IMR-90 (cell line): ENCODE measurements at regions of chr3 and their contacts with region 1.

Region 1: DNA sequence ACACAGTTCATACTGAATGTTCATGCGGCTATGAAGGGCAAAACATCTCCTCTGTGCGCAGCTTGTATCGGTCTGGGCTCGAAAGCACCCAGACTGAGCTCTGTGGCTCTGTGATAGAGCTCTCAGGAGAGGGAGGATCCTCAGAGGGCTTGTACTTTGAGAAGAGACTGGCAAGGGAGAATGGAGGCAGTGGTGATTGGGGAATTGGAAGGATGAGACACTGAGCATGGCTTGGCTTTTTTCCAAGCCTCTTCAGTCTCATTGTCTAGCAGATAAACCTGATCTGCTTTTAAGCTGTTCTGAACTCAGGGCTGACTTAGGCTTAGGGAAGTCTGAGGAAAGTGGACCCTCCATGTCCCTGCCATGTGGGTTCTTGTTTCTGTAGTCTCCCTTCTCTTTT is 43.0 kb downstream of the RAD54L2 start:
- DNase-seq: peak; percentile 48
- ATAC-seq: peak; percentile 18; the same call in 1 of the 2 replicates
- H3K4me3 ChIP-seq: no peak overlapping the region
- H3K27ac ChIP-seq: no peak overlapping the region
- H3K4me1 ChIP-seq: peaks cover 9% of the 10 kb centered on the region
- H3K27me3 ChIP-seq: no peaks in the 10 kb centered on the region
- CTCF ChIP-seq: no peak
- POLR2A ChIP-seq: no peak
- RAD21 ChIP-seq: no peak

Region 2: GRCh38 chr3:51622868-51623267 is 41.3 kb after region 1 on chr3:
- CTCF ChIA-PET with region 1: no interaction called
- POLR2A ChIA-PET with region 1: no interaction called
- dilution Hi-C with region 1: no loop called
- in situ Hi-C with region 1: no loop called
- intact Hi-C with region 1: loop called (anchors 5 kb)
- DNase-seq: peak; percentile 72
- ATAC-seq: no peak
- H3K4me3 ChIP-seq: no peak overlapping the region
- H3K27ac ChIP-seq: no peak overlapping the region
- H3K4me1 ChIP-seq: peaks cover 20% of the 10 kb centered on the region
- H3K27me3 ChIP-seq: no peaks in the 10 kb centered on the region
- CTCF ChIP-seq: no peak
- POLR2A ChIP-seq: no peak
- RAD21 ChIP-seq: no peak